ENCODE measurements at regions of chr6 and their contacts with region 1.

Region 1: DNA sequence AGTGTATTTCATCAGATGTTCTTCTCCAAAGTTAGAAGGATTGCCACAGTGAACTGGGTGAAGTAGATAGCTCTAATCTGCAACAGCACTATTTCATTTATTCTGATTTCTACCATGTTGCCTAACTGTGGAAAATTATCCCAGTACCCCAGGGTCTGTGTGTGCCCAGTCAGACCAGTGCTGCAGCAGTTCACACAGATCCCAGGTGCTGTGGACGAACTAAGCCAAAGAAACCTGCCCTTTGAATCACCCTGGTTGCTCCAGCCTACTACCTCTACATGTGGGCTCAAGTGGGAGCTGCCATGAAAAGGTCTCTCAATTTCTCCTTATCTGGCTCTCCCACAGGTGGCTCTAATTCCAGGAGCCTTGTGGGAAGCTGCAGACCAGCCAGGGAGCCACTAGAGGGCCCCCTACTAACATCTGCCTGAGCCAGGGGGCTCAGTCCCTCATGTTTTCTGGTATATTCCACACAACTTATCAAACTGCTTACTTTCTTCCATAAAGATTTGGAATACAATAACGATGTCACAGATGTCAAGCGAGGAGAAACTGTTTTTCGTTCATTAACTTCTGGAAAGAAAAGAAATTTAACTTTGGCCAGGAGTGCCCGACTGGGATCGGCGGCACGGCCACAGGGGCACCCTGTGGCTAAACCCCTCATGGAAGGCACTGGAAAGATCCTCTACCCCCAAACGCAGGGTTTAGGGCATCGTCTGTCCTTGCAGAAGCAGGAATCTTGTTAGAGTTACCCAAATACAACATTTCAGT is 31.6 kb upstream of the LY86 start:
- DNase-seq: peak; percentile 15
- H3K4me3 Mint-ChIP-seq: no peak overlapping the region
- H3K27ac Mint-ChIP-seq: no peak overlapping the region
- H3K4me1 Mint-ChIP-seq: peaks cover 49% of the 10 kb centered on the region
- H3K27me3 Mint-ChIP-seq: peaks cover 16% of the 10 kb centered on the region

Region 2: GRCh38 chr6:6386010-6386409 is 170.9 kb before region 1 on chr6:
- intact Hi-C with region 1: no loop called
- DNase-seq: no peak
- H3K4me3 Mint-ChIP-seq: no peak overlapping the region
- H3K27ac Mint-ChIP-seq: no peak overlapping the region
- H3K4me1 Mint-ChIP-seq: no peaks in the 10 kb centered on the region
- H3K27me3 Mint-ChIP-seq: peaks cover 5% of the 10 kb centered on the region

Region 3: DNA sequence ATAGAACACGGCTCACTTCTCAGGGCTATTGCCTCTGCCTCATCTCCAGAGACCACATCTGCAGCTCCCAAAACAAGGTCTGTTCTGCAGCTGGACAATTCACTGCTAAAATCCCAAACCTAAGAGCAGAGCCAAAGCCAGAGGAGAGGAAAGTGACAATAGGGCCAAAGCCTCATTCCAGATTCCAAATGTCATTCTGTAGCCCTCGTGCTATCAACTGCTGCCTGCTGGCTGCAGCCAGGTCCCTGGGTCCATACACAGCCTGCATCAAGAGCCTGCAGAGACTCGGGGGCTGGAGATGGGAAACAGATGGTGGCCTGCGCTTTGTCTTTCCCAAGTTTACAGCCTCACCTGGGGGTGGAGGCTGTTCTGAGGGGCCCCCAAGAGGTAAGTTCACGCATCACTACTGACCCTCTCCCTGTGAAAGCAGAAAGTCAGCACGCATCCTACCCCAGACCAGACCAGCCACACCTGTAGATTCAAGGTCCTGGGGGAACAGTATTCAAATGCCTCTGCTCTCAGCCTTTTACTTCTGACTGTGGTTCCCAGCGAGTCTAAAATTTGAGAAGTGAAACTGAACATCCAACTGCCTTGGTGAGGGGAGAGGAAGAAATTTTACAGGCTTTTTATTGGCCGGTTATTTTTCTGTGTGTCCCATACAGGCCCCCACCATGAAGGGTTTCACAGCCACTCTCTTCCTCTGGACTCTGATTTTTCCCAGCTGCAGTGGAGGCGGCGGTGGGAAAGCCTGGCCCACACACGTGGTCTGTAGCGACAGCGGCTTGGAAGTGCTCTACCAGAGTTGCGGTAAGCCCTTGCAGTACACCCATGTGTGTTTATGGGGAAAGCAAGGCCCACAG is 31.4 kb after region 1 on chr6 and contains the start of gene LY86:
- intact Hi-C with region 1: loop called (anchors 2 kb)
- DNase-seq: no peak
- H3K4me3 Mint-ChIP-seq: peak within 1 kb of the TSS; percentile 53
- H3K27ac Mint-ChIP-seq: peak within 1 kb of the TSS; percentile 65
- H3K4me1 Mint-ChIP-seq: peaks cover 85% of the 10 kb centered on the region
- H3K27me3 Mint-ChIP-seq: no peaks in the 10 kb centered on the region
- total RNA-seq, gene LY86: 1.1 and 1.2 TPM in 2 replicates